ENCODE measurements at regions of chr2 and their contacts with region 1.

Region 1: DNA sequence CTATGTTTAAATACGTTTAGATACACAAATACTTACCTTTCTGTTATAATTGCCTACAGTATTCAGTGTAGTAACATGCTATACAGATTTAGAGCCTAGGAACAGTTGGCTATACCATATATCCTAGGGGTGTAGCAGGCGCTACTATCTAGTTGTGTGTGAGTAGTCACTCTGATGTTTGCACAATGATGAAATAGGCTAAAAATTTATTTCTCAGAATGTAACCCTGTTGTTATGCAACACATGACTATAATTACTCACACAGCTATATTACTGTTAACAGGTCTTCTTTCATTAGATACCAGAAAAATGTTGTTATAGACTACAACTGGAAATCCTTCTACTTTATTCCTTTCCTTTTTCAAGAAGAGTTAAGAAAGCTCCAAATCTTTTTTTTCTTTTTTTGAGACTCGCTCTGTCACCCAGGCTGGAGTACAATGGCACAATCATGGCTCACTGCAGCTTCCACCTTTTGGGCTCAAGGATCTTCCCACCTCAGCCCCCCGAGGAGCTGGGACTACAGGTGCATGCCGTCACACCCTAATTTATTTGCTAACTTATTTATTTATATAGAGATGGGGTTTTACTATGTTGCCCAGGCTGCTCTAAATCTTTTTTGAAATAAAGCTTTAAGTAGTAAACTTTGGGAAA is 48.5 kb downstream of the C2orf74 start:
- DNase-seq: peak; percentile 91
- ATAC-seq: peak; percentile 98
- H3K4me3 ChIP-seq: no peak overlapping the region; the same call in 1 of the 2 replicates
- H3K27ac ChIP-seq: peak overlapping the region; percentile 47
- H3K4me1 ChIP-seq: peaks cover 13% of the 10 kb centered on the region
- H3K27me3 ChIP-seq: no peaks in the 10 kb centered on the region
- CTCF ChIP-seq: no peak

Region 2: DNA sequence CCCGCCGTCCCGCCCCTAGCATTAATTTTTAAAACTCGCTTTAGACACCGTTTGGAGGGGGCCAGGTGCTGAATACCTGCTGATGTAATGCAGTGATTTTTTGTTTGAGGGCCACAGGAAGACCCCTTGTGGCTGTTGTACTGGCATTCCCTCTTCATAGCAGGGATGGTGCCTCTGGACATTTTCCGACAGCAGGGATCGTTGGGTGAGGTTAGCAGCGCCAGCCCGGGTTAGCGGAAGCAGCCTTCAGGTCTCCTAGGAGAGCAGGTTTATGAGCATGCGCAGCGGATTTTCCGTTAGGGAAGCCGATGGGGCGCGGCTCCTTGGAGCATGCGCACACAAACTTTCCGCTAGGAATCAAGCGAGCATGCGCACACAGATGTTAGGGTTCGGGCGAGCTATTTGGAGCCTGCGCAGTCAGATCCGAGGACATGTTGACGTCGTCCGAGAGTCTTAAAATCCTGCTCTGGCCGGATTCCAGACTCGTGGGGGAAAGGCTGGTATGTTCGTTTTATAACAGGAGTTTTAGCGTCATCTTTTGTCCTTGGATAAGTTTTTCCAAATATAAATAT is 65.7 kb before region 1 on chr2:
- CTCF ChIA-PET with region 1: no interaction called
- POLR2A ChIA-PET with region 1: no interaction called
- intact Hi-C with region 1: no loop called
- DNase-seq: peak; percentile 99
- ATAC-seq: peak; percentile 96
- H3K4me3 ChIP-seq: peak overlapping the region; percentile 65
- H3K27ac ChIP-seq: no peak overlapping the region
- H3K4me1 ChIP-seq: peaks cover 6% of the 10 kb centered on the region
- H3K27me3 ChIP-seq: no peaks in the 10 kb centered on the region
- CTCF ChIP-seq: no peak

Region 3: GRCh38 chr2:61176755-61177726 is 33.4 kb before region 1 on chr2:
- CTCF ChIA-PET with region 1: no interaction called
- POLR2A ChIA-PET with region 1: no interaction called
- intact Hi-C with region 1: loop called (anchors 2 kb)
- DNase-seq: peak; percentile 95
- ATAC-seq: peak; percentile 82
- H3K4me3 ChIP-seq: peak overlapping the region; percentile 68
- H3K27ac ChIP-seq: peak overlapping the region; percentile 81
- H3K4me1 ChIP-seq: peaks cover 43% of the 10 kb centered on the region
- H3K27me3 ChIP-seq: no peaks in the 10 kb centered on the region
- CTCF ChIP-seq: 0 out of 2 replicates have a peak, but pooled peaks have one; percentile 8

Region 4: GRCh38 chr2:61416871-61417645 is 206.6 kb after region 1 on chr2:
- CTCF ChIA-PET with region 1: interaction called, 11 read pairs
- POLR2A ChIA-PET with region 1: no interaction called
- intact Hi-C with region 1: no loop called
- DNase-seq: no peak
- ATAC-seq: no peak
- H3K4me3 ChIP-seq: no peak overlapping the region
- H3K27ac ChIP-seq: no peak overlapping the region
- H3K4me1 ChIP-seq: peaks cover 5% of the 10 kb centered on the region; the same call in 1 of the 2 replicates
- H3K27me3 ChIP-seq: no peaks in the 10 kb centered on the region
- CTCF ChIP-seq: no peak

Region 5: DNA sequence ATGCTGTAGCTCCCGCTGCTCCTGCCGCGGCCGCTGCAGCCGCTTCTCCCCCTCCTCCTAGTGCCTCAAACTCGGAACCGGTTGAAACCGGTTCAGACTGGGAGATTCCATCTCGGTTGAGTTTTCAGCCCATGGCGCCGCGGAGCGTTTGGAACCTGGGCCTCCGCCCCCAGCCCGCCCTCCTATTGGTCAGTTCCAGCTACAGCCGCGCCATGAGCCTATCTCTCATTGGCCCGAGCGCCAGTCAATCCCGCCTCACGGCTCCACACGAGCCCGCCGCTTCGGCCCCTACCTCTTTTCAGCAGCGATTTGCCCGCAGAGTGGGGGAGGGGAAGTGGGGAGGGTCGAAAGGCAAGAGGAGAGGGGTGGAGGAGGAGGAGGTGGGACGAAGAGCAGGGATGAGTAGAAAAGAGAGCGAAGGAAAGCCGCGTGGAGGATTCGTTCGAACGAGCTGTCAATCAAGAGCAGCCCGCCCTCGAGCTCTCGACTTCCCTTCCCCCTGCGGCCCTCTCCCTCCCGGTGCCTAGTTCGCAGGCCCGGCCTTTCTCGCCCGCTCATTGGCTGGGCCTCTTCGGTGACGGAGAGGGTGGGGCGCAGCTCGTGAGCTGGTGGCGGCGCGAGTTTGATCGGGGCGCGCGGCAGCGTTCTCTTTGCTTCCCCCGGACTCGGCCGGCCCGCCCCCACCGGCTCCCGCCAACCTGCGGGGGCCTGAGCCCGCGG is 327.9 kb after region 1 on chr2 and contains the start of gene XPO1:
- CTCF ChIA-PET with region 1: no interaction called
- POLR2A ChIA-PET with region 1: no interaction called
- intact Hi-C with region 1: no loop called
- DNase-seq: peak; percentile 99
- ATAC-seq: peak; percentile 82
- H3K4me3 ChIP-seq: peak within 1 kb of the TSS; percentile 94
- H3K27ac ChIP-seq: peak within 1 kb of the TSS; percentile 93
- H3K4me1 ChIP-seq: peaks cover 25% of the 10 kb centered on the region
- H3K27me3 ChIP-seq: no peaks in the 10 kb centered on the region
- CTCF ChIP-seq: no peak
- total RNA-seq, gene XPO1: 138 and 170 TPM in 2 replicates